Prostate gland (tissue), 2 donors: ENCODE measurements at regions of chr14 and their contacts with region 1.

Region 1: GRCh38 chr14:73173092-73173735 is 36.9 kb downstream of the PSEN1 start:
- DNase-seq: no peak
- H3K4me3 ChIP-seq: no peak overlapping the region
- H3K27ac ChIP-seq: no peak overlapping the region
- H3K4me1 ChIP-seq: no peaks in the 10 kb centered on the region
- H3K27me3 ChIP-seq: no peaks in the 10 kb centered on the region
- CTCF ChIP-seq: peak in 3 of 4 experiments; percentile 26 to 53 (median 41)
- POLR2A ChIP-seq: no peak

Region 2: GRCh38 chr14:73289729-73290128 is 116.5 kb after region 1 on chr14:
- intact Hi-C with region 1: loop called (anchors 5 kb)
- DNase-seq: no peak
- H3K4me3 ChIP-seq: no peak overlapping the region
- H3K27ac ChIP-seq: no peak overlapping the region
- H3K4me1 ChIP-seq: no peaks in the 10 kb centered on the region
- H3K27me3 ChIP-seq: no peaks in the 10 kb centered on the region
- CTCF ChIP-seq: no peak
- POLR2A ChIP-seq: no peak